A673 (cell line): ENCODE measurements at regions of chr7 and their contacts with region 1.

Region 1: DNA sequence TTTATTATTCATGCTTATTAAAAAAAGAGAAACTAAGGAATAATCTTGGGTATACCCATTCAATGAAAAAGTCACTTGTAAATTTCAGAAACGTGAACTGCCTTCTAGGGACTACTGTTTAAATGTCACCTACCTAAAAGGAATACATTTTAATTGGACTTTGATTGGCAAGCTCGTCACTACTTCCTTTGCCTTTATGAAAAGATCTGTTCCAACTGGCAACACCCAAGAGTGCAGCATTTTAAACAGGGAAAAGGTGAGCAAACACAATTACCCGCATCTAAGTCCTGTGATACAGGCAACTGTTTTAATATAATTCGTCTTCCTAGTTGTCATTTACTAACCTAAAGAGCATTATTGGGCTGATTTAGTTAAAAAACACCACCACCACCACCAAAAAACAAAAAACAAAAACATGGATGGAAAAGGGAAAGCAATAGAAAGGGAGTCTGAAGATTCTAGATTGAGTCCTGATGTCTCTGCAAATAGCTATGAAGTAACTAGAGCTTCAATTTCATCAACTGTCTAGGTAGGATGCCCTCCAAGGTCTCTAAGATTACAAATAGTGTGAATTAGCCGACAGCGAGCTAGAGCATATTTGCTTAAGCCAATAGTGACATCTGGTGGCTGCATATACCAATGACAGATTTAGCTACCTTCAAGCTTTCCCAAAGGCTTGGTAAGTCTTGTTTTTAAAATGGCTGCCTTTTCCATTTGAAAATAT is 33.8 kb upstream of the ICA1 start:
- DNase-seq: peak; percentile 87
- H3K4me3 ChIP-seq: no peak overlapping the region
- H3K27ac ChIP-seq: no peak overlapping the region
- H3K4me1 ChIP-seq: no peaks in the 10 kb centered on the region
- H3K27me3 ChIP-seq: peaks cover 46% of the 10 kb centered on the region
- CTCF ChIP-seq: peak; percentile 78

Region 2: DNA sequence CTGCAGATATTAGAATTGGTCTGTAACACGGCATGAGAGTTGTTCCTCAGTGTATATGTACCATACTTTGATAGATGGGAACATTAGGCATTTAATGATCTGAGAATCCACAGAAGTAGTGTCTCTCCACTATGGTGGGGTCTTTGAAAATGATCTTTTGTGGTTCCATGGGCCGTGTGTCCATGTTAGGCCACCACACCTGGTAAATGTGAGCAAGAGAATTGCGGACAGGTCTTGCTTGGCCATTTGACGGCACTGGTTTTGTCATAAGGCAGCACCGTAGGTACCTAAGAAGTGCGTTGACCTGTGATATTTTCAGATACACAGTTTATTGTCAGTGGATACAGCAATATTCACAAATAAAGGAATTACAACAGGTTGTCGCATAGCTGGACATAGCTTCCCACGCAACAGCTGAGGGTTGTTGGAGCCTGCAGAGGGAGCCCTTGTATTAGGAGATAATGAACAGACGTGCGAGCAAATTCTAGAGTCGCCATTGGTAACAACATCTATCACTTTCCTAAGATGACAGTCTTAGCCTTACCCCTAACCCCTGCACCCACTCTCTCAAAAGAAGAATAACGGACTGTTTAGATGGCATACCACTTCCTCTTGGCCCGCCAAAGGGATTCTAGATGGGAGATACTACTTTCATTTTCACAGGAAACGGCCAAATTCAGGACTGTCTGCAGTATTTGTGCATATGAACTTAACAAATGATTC is 871.5 kb before region 1 on chr7:
- CTCF ChIA-PET with region 1: interaction called, 6 read pairs
- POLR2A ChIA-PET with region 1: no interaction called
- intact Hi-C with region 1: loop called (anchors 5 kb)
- DNase-seq: peak; percentile 76
- H3K4me3 ChIP-seq: peak overlapping the region; percentile 33
- H3K27ac ChIP-seq: no peak overlapping the region
- H3K4me1 ChIP-seq: no peaks in the 10 kb centered on the region
- H3K27me3 ChIP-seq: peaks cover 3% of the 10 kb centered on the region
- CTCF ChIP-seq: peak; percentile 86

Region 3: DNA sequence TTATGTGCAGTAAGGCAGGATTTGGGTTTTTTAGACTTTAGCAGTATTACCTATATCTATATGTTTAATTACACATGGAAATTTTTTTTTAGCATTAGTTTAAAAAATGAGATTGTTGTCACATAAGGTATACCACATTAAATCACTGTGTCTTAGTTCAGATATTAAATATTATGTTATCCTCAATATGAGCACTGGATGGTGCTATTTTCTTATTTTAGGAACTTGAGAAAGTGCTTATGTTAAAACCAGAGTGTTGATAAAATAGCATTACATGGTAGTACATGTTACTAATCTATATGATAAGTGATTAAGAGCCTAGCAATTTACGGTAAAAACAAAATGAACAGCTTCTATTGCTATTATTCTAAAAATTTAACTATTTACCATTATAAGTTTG is 700.3 kb before region 1 on chr7:
- CTCF ChIA-PET with region 1: no interaction called
- POLR2A ChIA-PET with region 1: no interaction called
- intact Hi-C with region 1: loop called (anchors 5 kb)
- DNase-seq: peak; percentile 49
- H3K4me3 ChIP-seq: no peak overlapping the region
- H3K27ac ChIP-seq: no peak overlapping the region
- H3K4me1 ChIP-seq: no peaks in the 10 kb centered on the region
- H3K27me3 ChIP-seq: no peaks in the 10 kb centered on the region
- CTCF ChIP-seq: peak; percentile 56